ENCODE measurements at regions of chr1 and their contacts with region 1.

Region 1: GRCh38 chr1:113928941-113929749 is at the start of gene HIPK1:
- DNase-seq: peak; percentile 84 to 96 (median 92)
- ATAC-seq: peak; percentile 45 to 67
- H3K4me3 Mint-ChIP-seq: peak within 1 kb of the TSS; percentile 82 to 100 (median 98)
- H3K27ac Mint-ChIP-seq: peak within 1 kb of the TSS; percentile 98 to 100 (median 100)
- H3K4me1 Mint-ChIP-seq: peaks cover 39 to 57% (median 53%) of the 10 kb centered on the region in 4 donors
- H3K27me3 Mint-ChIP-seq: peaks cover 0 to 4% (median 0%) of the 10 kb centered on the region in 5 donors
- polyA plus RNA-seq, gene HIPK1: 14.5 to 19.3 (median 17.5) TPM

Region 2: DNA sequence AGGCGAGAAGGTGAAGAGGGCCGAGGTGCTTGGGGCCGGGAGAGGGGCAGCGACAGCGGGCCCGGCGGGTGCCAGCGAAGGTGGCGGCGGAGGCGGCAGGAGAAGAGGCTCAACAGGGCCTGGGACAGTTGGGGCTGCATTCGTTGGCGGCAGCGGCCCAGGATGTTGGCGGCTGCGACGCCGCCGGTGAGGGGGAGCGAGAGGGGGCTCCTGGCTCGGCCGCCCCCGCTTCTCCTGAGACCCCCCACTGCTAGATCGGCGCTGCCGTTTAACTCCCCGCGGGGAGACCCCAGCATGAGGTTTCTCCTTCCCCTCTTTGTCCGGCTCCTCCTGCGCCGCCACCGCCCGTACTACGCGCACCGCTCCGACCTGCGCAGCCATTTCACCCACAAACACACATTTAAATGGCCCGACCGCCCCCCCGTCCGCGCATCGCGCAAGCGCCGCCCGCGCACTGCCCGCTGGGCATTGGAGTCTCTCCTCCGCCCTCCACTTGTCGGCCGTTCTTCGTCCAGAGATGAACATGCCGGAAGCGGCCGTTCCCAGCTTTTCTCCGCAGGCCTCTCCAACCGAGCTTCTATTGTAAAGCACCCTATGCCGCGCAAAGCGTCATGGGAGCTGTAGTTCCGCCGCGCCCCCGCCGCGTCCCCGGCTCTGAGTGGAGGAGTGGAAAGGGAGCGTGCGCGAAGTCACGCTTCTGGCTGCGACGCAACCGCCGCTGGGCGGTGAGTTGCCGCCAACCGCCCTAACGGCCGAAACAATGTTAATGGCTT is 117.1 kb before region 1 on chr1 and contains the start of gene RSBN1:
- POLR2A ChIA-PET with region 1: interaction called, 34 read pairs
- DNase-seq: peak; percentile 91 to 99 (median 98)
- ATAC-seq: peak; percentile 91 to 93
- H3K4me3 Mint-ChIP-seq: peak within 1 kb of the TSS; percentile 92 to 99 (median 98)
- H3K27ac Mint-ChIP-seq: peak within 1 kb of the TSS; percentile 97 to 100 (median 98)
- H3K4me1 Mint-ChIP-seq: peaks cover 11 to 46% (median 32%) of the 10 kb centered on the region in 4 donors
- H3K27me3 Mint-ChIP-seq: no peaks in the 10 kb centered on the region
- polyA plus RNA-seq, gene RSBN1: 34.8 to 39.1 (median 37.5) TPM

Region 3: GRCh38 chr1:113874012-113874879 is 54.9 kb before region 1 on chr1:
- POLR2A ChIA-PET with region 1: interaction called, 11 read pairs
- DNase-seq: peak in 3 of 10 donors; percentile 12 to 32 (median 29)
- ATAC-seq: peak in 1 of 2 donors; percentile 13
- H3K4me3 Mint-ChIP-seq: peak overlapping the region in 3 of 10 donors; percentile 46 to 71 (median 65)
- H3K27ac Mint-ChIP-seq: peak overlapping the region; percentile 3 to 91 (median 80)
- H3K4me1 Mint-ChIP-seq: peaks cover 20 to 76% (median 60%) of the 10 kb centered on the region in 4 donors
- H3K27me3 Mint-ChIP-seq: no peaks in the 10 kb centered on the region

Region 4: DNA sequence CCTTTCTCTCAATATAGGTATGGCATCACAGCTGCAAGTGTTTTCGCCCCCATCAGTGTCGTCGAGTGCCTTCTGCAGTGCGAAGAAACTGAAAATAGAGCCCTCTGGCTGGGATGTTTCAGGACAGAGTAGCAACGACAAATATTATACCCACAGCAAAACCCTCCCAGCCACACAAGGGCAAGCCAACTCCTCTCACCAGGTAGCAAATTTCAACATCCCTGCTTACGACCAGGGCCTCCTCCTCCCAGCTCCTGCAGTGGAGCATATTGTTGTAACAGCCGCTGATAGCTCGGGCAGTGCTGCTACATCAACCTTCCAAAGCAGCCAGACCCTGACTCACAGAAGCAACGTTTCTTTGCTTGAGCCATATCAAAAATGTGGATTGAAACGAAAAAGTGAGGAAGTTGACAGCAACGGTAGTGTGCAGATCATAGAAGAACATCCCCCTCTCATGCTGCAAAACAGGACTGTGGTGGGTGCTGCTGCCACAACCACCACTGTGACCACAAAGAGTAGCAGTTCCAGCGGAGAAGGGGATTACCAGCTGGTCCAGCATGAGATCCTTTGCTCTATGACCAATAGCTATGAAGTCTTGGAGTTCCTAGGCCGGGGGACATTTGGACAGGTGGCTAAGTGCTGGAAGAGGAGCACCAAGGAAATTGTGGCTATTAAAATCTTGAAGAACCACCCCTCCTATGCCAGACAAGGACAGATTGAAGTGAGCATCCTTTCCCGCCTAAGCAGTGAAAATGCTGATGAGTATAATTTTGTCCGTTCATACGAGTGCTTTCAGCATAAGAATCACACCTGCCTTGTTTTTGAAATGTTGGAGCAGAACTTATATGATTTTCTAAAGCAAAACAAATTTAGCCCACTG is 11.5 kb after region 1 on chr1:
- POLR2A ChIA-PET with region 1: interaction called, 179 read pairs
- DNase-seq: peak in 9 of 10 donors; percentile 13 to 68 (median 62)
- ATAC-seq: peak; percentile 70 to 74
- H3K4me3 Mint-ChIP-seq: peak overlapping the region; percentile 74 to 92 (median 84)
- H3K27ac Mint-ChIP-seq: peak overlapping the region; percentile 91 to 98 (median 96)
- H3K4me1 Mint-ChIP-seq: peaks cover 43 to 86% (median 77%) of the 10 kb centered on the region in 4 donors
- H3K27me3 Mint-ChIP-seq: no peaks in the 10 kb centered on the region

Region 5: GRCh38 chr1:113949007-113949406 is 19.9 kb after region 1 on chr1:
- POLR2A ChIA-PET with region 1: interaction called, 179 read pairs
- DNase-seq: peak in 5 of 10 donors; percentile 32 to 48 (median 40)
- ATAC-seq: no peak
- H3K4me3 Mint-ChIP-seq: peak overlapping the region; percentile 30 to 90 (median 70)
- H3K27ac Mint-ChIP-seq: peak overlapping the region; percentile 89 to 97 (median 95)
- H3K4me1 Mint-ChIP-seq: peaks cover 19 to 93% (median 81%) of the 10 kb centered on the region in 4 donors
- H3K27me3 Mint-ChIP-seq: no peaks in the 10 kb centered on the region

Region 6: GRCh38 chr1:113963281-113963906 is 34.2 kb after region 1 on chr1:
- POLR2A ChIA-PET with region 1: interaction called, 17 read pairs
- DNase-seq: peak in 3 of 10 donors; percentile 23 to 45 (median 34)
- ATAC-seq: peak; percentile 69 to 76
- H3K4me3 Mint-ChIP-seq: peak overlapping the region in 2 of 10 donors; percentile 25 to 29
- H3K27ac Mint-ChIP-seq: peak overlapping the region; percentile 15 to 91 (median 75)
- H3K4me1 Mint-ChIP-seq: peaks cover 12 to 39% (median 24%) of the 10 kb centered on the region in 4 donors
- H3K27me3 Mint-ChIP-seq: no peaks in the 10 kb centered on the region

Measured in naive thymus-derived CD8-positive, alpha-beta T cell (primary cell).